Cardiac septum (tissue), 1 donor: ENCODE measurements at regions of chr14 and their contacts with region 1.

Region 1: GRCh38 chr14:94921882-94922585 is 152.1 kb upstream of the GSC start:
- DNase-seq: no peak

Region 2: GRCh38 chr14:94960285-94960996 is 38.4 kb after region 1 on chr14:
- intact Hi-C with region 1: no loop called
- DNase-seq: no peak

Region 3: GRCh38 chr14:94971750-94972149 is 49.7 kb after region 1 on chr14:
- intact Hi-C with region 1: loop called (anchors 5 kb)
- DNase-seq: no peak

Region 4: GRCh38 chr14:95185033-95185766 is 263.2 kb after region 1 on chr14:
- intact Hi-C with region 1: no loop called
- DNase-seq: peak; percentile 90